Head of caudate nucleus (tissue), 42 donors: ENCODE measurements at regions of chr2 and their contacts with region 1.

Region 1: GRCh38 chr2:163171786-163172531 is 333.4 kb upstream of the KCNH7 start:
- DNase-seq: no peak

Region 2: GRCh38 chr2:162945785-162946184 is 226.2 kb before region 1 on chr2:
- intact Hi-C with region 1: no loop called
- DNase-seq: no peak

Region 3: DNA sequence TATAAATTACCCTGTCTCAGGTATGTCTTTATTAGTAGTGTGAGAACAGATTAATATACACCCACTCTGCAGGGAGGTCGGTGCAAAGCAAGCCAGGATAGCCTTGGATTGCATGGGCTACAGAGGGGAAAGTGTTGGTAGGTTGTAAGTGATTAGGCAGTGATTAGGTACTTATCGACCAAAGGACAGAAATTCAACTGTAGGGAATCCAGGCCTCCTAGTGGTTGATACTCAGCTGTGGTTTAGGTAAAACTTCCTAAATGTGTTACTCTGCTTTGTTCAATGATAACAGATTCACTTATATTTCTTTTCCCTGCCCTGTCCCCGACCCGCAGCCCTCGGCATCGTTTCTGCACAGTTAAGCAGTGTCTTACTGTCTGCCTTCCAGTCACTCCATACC is 119.8 kb after region 1 on chr2:
- intact Hi-C with region 1: no loop called
- DNase-seq: no peak

Region 4: GRCh38 chr2:164429354-164429753 is 1257.4 kb after region 1 on chr2:
- intact Hi-C with region 1: loop called (anchors 5 kb)
- DNase-seq: no peak